IMR-90 (cell line): ENCODE measurements at regions of chr19 and their contacts with region 1.

Region 1: GRCh38 chr19:40750059-40750873 is at the start of gene ACTMAP:
- DNase-seq: peak; percentile 100
- ATAC-seq: peak; percentile 94
- H3K4me3 ChIP-seq: peak within 1 kb of the TSS; percentile 64
- H3K27ac ChIP-seq: peak within 1 kb of the TSS; percentile 85
- H3K4me1 ChIP-seq: peaks cover 11% of the 10 kb centered on the region
- H3K27me3 ChIP-seq: no peaks in the 10 kb centered on the region
- CTCF ChIP-seq: no peak
- POLR2A ChIP-seq: peak; percentile 67; the same call in 1 of the 2 replicates
- RAD21 ChIP-seq: no peak
- total RNA-seq, gene ACTMAP: 0.28 and 0.54 TPM in 2 replicates

Region 2: DNA sequence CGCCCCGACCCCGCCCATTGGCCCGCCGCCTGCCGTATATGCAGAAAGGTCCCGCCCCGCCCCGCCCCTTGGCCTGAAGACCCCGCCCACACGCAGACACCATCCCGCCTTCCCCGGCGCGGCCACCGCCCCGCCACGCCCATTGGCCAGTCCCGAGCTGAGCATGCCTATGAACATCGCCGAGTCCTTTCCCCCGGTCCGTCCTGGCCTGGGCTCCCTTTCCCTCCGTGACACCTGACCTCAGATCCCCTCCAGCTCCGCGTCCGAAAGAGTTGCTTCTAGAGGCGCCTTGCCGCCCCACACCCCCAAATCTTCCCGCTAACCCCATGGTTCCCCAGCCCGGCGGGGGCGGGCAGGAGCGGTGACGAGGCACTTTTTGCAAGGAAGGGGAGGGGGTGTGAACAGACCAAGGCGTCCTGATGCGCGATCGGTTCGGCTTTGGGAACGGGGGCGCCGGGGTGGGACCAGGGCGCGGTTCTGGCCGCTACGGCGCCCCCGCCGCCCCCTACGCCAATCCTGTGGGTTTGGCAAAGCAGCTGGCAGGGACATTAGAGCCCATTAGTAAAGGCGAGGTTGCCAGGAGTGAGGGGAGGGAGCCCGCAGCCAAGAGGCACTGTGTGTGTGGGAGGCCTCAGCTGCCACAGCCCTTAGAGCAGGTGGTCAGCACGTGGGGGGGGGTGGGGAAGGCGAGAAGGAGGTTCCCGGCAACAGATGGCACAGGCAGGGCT is 59.4 kb before region 1 on chr19:
- CTCF ChIA-PET with region 1: no interaction called
- POLR2A ChIA-PET with region 1: no interaction called
- dilution Hi-C with region 1: no loop called
- in situ Hi-C with region 1: no loop called
- intact Hi-C with region 1: loop called (anchors 2 kb)
- DNase-seq: peak; percentile 86
- ATAC-seq: peak; percentile 87
- H3K4me3 ChIP-seq: peak overlapping the region; percentile 47
- H3K27ac ChIP-seq: peak overlapping the region; percentile 90
- H3K4me1 ChIP-seq: peaks cover 17% of the 10 kb centered on the region
- H3K27me3 ChIP-seq: no peaks in the 10 kb centered on the region
- CTCF ChIP-seq: no peak
- POLR2A ChIP-seq: no peak; the same call in 1 of the 2 replicates
- RAD21 ChIP-seq: no peak

Region 3: GRCh38 chr19:40716655-40717324 is 33.5 kb before region 1 on chr19 and contains the starts of genes COQ8B and ITPKC:
- CTCF ChIA-PET with region 1: interaction called, 4 read pairs
- POLR2A ChIA-PET with region 1: interaction called, 3 read pairs
- dilution Hi-C with region 1: no loop called
- in situ Hi-C with region 1: no loop called
- intact Hi-C with region 1: loop called (anchors 2 kb)
- DNase-seq: peak; percentile 96
- ATAC-seq: peak; percentile 75
- H3K4me3 ChIP-seq: peak within 1 kb of the TSS; percentile 86
- H3K27ac ChIP-seq: peak within 1 kb of the TSS; percentile 96
- H3K4me1 ChIP-seq: peaks cover 9% of the 10 kb centered on the region
- H3K27me3 ChIP-seq: no peaks in the 10 kb centered on the region
- CTCF ChIP-seq: 0 out of 2 replicates have a peak, but pooled peaks have one; percentile 8
- POLR2A ChIP-seq: peak; percentile 83
- RAD21 ChIP-seq: no peak
- total RNA-seq, gene COQ8B: 14.2 and 14.9 TPM in 2 replicates
- total RNA-seq, gene ITPKC: 7.7 and 8.6 TPM in 2 replicates

Region 4: GRCh38 chr19:40777937-40778705 is 27.9 kb after region 1 on chr19 and contains the start of gene RAB4B:
- CTCF ChIA-PET with region 1: no interaction called
- POLR2A ChIA-PET with region 1: no interaction called
- dilution Hi-C with region 1: no loop called
- in situ Hi-C with region 1: no loop called
- intact Hi-C with region 1: loop called (anchors 2 kb)
- DNase-seq: peak; percentile 99
- ATAC-seq: peak; percentile 88
- H3K4me3 ChIP-seq: peak within 1 kb of the TSS; percentile 74
- H3K27ac ChIP-seq: peak within 1 kb of the TSS; percentile 89
- H3K4me1 ChIP-seq: peaks cover 6% of the 10 kb centered on the region
- H3K27me3 ChIP-seq: no peaks in the 10 kb centered on the region
- CTCF ChIP-seq: no peak
- POLR2A ChIP-seq: peak; percentile 88
- RAD21 ChIP-seq: no peak
- total RNA-seq, gene RAB4B: 7.9 and 8.3 TPM in 2 replicates

Region 5: DNA sequence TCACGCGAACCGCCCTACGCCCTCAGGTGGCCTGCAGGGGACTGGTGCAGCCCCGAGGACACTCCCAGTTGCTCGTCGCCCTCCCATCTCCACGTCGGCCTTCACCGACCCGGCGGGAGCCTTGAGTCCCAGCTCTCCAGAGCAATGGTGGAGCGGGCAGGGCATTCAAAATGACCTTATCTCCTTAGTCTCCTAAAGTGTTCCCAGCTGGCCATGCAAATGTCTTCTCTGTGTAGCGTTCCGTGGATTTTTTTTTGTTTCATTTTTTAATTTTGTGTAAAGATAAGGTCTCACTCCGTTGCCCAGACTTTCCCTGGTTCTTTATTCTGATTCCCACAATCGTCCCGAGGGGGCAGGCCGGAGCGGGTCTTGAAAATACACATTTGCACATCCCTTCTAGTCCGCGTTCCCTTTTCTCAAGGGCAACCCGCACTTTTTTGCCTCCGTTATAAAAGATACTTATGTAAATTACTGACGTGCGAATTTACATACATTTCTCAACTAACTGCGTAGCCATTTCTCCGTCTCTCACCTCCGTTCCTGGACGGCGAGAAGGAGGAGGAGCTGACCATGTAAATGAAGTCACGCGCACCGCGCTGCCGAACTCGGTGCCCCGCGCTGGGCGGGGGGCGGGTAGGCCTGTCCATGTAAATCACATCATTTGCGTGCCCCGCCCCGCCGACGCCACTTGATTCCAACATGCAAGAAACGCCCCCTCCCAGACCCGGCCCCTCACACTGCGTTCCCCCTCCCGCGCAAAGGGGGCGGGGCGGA is 48.1 kb after region 1 on chr19:
- CTCF ChIA-PET with region 1: interaction called, 3 read pairs
- POLR2A ChIA-PET with region 1: interaction called, 6 read pairs
- dilution Hi-C with region 1: no loop called
- in situ Hi-C with region 1: no loop called
- intact Hi-C with region 1: loop called (anchors 5 kb)
- DNase-seq: peak; percentile 99
- ATAC-seq: peak; percentile 13
- H3K4me3 ChIP-seq: peak overlapping the region; percentile 55
- H3K27ac ChIP-seq: peak overlapping the region; percentile 47
- H3K4me1 ChIP-seq: peaks cover 28% of the 10 kb centered on the region
- H3K27me3 ChIP-seq: no peaks in the 10 kb centered on the region
- CTCF ChIP-seq: peak; percentile 47
- POLR2A ChIP-seq: no peak
- RAD21 ChIP-seq: no peak; the same call in 1 of the 2 replicates